ENCODE measurements at regions of chr16 and their contacts with region 1.

Region 1: GRCh38 chr16:3665508-3665907 is 11.0 kb downstream of the DNASE1 start:
- DNase-seq: peak in 1 of 2 donors; percentile 66
- ATAC-seq: peak; percentile 30 to 57 (median 42)
- H3K4me3 ChIP-seq: no peak overlapping the region
- H3K4me3 Mint-ChIP-seq: no peak overlapping the region
- H3K27ac ChIP-seq: no peak overlapping the region
- H3K27ac Mint-ChIP-seq: peak overlapping the region in 1 of 2 donors; percentile 38
- H3K4me1 ChIP-seq: peaks cover 35% of the 10 kb centered on the region
- H3K4me1 Mint-ChIP-seq: peaks cover 19 to 34% of the 10 kb centered on the region in 2 donors
- H3K27me3 ChIP-seq: no peaks in the 10 kb centered on the region
- H3K27me3 Mint-ChIP-seq: no peaks in the 10 kb centered on the region
- CTCF ChIP-seq: no peak

Region 2: GRCh38 chr16:3525951-3526350 is 139.6 kb before region 1 on chr16:
- intact Hi-C with region 1: loop called (anchors 5 kb)
- DNase-seq: no peak
- ATAC-seq: no peak
- H3K4me3 ChIP-seq: no peak overlapping the region
- H3K4me3 Mint-ChIP-seq: no peak overlapping the region
- H3K27ac ChIP-seq: no peak overlapping the region
- H3K27ac Mint-ChIP-seq: no peak overlapping the region
- H3K4me1 ChIP-seq: no peaks in the 10 kb centered on the region
- H3K4me1 Mint-ChIP-seq: peaks cover 5 to 10% of the 10 kb centered on the region in 2 donors
- H3K27me3 ChIP-seq: no peaks in the 10 kb centered on the region
- H3K27me3 Mint-ChIP-seq: no peaks in the 10 kb centered on the region
- CTCF ChIP-seq: no peak